Activated B cell treated with CpG ODN at 0.5 μM for 24 hours (primary cell): ENCODE measurements at regions of chr17 and their contacts with region 1.

Region 1: GRCh38 chr17:4420692-4421131 is 13.0 kb upstream of the SPNS3 start:
- DNase-seq: peak; percentile 24
- ATAC-seq: peak; percentile 98
- H3K4me3 Mint-ChIP-seq: no peak overlapping the region
- H3K27ac Mint-ChIP-seq: no peak overlapping the region
- H3K4me1 Mint-ChIP-seq: peaks cover 4% of the 10 kb centered on the region
- H3K27me3 Mint-ChIP-seq: no peaks in the 10 kb centered on the region
- CTCF ChIP-seq: no peak

Region 2: GRCh38 chr17:4498461-4499397 is 78.0 kb after region 1 on chr17 and contains the start of gene SPNS2:
- CTCF ChIA-PET with region 1: no interaction called
- POLR2A ChIA-PET with region 1: no interaction called
- intact Hi-C with region 1: loop called (anchors 2 kb)
- DNase-seq: peak; percentile 65
- ATAC-seq: peak; percentile 78
- H3K4me3 Mint-ChIP-seq: peak within 1 kb of the TSS; percentile 78
- H3K27ac Mint-ChIP-seq: no peak within 1 kb of the TSS
- H3K4me1 Mint-ChIP-seq: peaks cover 32% of the 10 kb centered on the region
- H3K27me3 Mint-ChIP-seq: peaks cover 33% of the 10 kb centered on the region
- CTCF ChIP-seq: no peak
- total RNA-seq, gene SPNS2: 0.38 TPM in 1 of 2 replicates, not detected in the other

Region 3: DNA sequence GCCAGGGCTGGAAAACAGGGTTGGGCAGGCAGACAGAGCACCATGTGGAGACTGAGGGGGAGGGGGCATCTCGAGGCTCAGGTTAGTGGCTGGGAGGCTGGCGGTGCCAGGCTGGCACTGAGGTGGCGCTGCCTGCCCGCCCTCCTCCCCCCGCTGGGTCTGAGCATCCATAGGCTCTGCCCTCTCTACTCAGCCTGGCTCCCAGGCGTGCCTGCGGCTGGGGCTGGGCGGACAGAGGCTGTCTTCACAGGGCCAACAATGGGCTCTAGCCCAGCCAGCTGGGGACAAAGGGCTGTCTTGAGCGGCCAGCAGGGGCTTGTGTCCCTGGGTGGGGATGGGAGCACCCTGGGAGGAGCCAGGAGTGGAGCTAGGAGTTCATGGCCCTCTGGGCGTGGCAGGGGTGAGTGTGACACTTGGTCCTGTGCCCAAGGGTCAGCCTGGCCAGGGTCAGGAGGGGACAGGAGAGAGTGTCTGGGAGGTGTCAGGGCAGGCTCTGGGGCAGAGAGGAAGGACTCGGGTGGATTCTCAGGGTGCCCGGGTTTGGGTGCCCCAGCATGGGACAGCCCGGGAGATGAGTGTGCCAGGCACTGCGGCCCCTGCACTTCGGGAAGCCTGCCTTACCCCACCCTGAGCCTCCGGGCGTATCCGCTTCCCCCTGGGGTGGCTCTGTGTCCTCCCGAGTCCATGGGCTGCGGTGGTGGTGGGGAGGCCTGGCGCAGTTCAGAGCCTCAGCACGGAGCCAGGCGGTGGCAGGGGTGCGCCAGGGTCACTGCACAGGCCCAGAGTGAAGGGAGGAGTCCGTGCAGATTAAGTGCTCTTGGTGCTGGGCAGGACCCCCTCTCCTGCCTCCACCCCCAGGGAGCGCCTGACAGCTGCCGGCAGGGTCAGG is 113.6 kb after region 1 on chr17:
- CTCF ChIA-PET with region 1: interaction called, 3 read pairs
- POLR2A ChIA-PET with region 1: no interaction called
- intact Hi-C with region 1: loop called (anchors 10 kb)
- DNase-seq: no peak
- ATAC-seq: no peak
- H3K4me3 Mint-ChIP-seq: no peak overlapping the region
- H3K27ac Mint-ChIP-seq: no peak overlapping the region
- H3K4me1 Mint-ChIP-seq: peaks cover 1% of the 10 kb centered on the region
- H3K27me3 Mint-ChIP-seq: peaks cover 4% of the 10 kb centered on the region
- CTCF ChIP-seq: no peak

Region 4: DNA sequence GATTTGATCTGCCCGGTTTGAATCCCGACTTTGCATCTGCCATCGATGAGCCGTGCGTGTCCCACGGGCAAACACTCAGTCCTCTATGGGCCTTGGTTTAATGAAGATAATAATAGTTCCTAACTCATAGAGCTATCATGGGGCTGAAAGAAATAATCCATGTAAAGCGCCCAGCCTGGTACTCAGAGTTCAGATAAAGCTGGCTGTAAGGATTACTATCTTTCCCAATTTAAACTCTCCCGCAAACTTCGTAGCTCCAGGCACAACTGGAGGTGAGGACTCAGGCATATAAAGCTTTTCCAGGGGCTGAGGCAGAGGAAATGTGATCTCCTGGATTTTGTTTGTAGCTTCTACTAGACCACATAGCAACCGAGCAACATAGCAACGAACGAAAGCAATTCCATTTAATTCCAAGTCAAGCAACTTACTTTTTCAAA is 204.5 kb after region 1 on chr17:
- CTCF ChIA-PET with region 1: interaction called, 6 read pairs
- POLR2A ChIA-PET with region 1: no interaction called
- intact Hi-C with region 1: loop called (anchors 1 kb)
- DNase-seq: no peak
- ATAC-seq: no peak
- H3K4me3 Mint-ChIP-seq: no peak overlapping the region
- H3K27ac Mint-ChIP-seq: no peak overlapping the region
- H3K4me1 Mint-ChIP-seq: peaks cover 2% of the 10 kb centered on the region
- H3K27me3 Mint-ChIP-seq: peaks cover 10% of the 10 kb centered on the region
- CTCF ChIP-seq: no peak

Region 5: DNA sequence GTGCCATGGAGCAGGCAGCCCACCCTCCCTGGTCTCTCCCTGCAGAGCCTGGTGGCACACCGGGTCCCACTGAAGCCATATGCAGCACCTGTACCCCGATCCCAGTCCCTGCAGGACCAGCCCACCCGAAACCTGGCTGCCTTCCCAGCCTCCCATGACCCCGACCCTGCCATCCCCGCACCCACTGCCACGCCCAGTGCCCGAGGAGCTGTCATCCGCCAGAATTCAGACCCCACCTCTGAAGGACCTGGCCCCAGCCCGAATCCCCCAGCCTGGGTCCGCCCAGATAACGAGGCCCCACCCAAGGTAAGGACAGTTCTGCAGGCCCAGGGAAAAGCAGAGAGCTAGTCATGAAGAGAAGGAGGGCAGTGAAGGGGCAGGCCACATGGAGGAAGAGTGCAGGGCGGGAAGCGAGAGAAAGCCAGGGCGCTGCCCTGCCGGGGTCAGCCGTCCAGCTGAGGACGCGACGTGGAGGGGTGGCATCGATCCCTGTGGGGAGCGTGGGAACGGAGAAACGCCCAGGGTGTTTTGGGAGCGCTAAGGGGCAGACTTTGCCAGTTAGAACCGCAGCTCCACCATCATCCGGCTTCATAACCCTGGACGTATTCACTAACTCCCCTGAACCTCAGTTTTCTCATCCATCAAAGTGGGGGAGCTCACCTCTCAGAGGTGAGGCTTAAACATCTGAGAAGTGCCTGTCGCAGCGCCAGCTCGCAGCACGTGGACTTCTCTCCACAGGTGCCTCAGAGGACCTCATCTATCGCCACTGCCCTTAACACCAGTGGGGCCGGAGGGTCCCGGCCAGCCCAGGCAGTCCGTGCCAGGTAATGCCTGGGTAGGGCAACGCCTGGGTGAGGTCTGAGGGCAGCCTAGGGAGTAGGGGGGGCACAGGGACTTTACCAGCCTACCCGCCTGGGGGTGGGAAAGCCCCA is 471.0 kb after region 1 on chr17:
- CTCF ChIA-PET with region 1: no interaction called
- POLR2A ChIA-PET with region 1: no interaction called
- intact Hi-C with region 1: loop called (anchors 1 kb)
- DNase-seq: no peak
- ATAC-seq: no peak
- H3K4me3 Mint-ChIP-seq: no peak overlapping the region
- H3K27ac Mint-ChIP-seq: no peak overlapping the region
- H3K4me1 Mint-ChIP-seq: peaks cover 4% of the 10 kb centered on the region
- H3K27me3 Mint-ChIP-seq: no peaks in the 10 kb centered on the region
- CTCF ChIP-seq: no peak